Activated CD8-positive, alpha-beta T cell treated with anti-CD3 and anti-CD28 coated beads for 36 hours (primary cell): ENCODE measurements at regions of chr4 and their contacts with region 1.

Region 1: GRCh38 chr4:103008875-103009729 is 10.4 kb downstream of the SLC9B1 start:
- DNase-seq: no peak
- ATAC-seq: peak; percentile 93
- H3K4me3 Mint-ChIP-seq: no peak overlapping the region
- H3K27ac Mint-ChIP-seq: no peak overlapping the region
- H3K4me1 Mint-ChIP-seq: no peaks in the 10 kb centered on the region
- H3K27me3 Mint-ChIP-seq: no peaks in the 10 kb centered on the region
- CTCF ChIP-seq: peak; percentile 83

Region 2: DNA sequence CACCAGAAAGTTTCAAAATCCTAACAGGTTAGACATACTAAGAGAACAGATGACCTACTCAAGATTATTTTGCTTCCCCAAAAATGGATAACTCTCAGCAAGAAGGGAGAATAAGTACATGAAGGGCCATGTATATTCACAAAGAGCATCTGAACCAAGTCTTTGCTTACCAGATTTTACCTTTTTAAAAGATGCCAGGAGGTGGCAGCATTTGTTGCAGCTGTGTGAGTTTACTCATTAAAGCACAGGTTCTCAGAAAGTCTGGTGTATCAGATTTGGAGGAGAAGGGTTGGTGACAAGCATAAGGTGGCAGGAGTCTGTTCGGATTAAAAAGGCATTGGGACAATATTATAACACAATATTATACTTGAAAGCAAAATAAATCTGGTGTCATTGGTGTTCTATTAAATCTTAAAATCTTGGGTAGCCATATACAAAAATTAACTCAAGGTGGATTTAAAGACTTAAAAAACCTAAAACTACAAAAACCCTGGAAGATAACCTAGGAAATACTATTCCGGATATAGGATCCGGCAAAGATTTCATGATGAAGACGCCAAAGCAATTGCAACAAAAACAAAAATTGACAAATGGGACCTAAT is 559.2 kb before region 1 on chr4:
- CTCF ChIA-PET with region 1: interaction called, 5 read pairs
- POLR2A ChIA-PET with region 1: no interaction called
- intact Hi-C with region 1: loop called (anchors 5 kb)
- DNase-seq: peak; percentile 73
- ATAC-seq: peak; percentile 77
- H3K4me3 Mint-ChIP-seq: no peak overlapping the region
- H3K27ac Mint-ChIP-seq: no peak overlapping the region
- H3K4me1 Mint-ChIP-seq: peaks cover 48% of the 10 kb centered on the region
- H3K27me3 Mint-ChIP-seq: no peaks in the 10 kb centered on the region
- CTCF ChIP-seq: peak; percentile 88

Region 3: DNA sequence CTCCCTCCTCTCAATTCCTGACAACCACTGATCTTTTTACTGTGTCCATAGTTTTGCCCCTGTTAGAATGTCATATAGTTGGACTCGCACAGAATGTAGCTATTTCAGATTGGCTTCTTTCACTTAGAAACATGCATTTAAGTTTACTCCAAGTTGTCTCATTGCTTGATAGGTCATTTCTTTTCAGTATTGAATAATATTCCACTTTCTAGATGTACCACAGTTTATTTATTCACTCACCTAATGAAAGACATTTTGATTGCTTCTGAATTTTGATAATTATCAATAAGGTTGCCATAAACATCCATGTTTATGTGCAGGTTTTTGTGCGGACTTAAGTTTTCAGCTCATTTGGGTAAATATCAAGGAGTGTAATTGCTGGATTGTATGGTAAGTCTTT is 28.1 kb before region 1 on chr4:
- CTCF ChIA-PET with region 1: no interaction called
- POLR2A ChIA-PET with region 1: no interaction called
- intact Hi-C with region 1: no loop called
- DNase-seq: no peak
- ATAC-seq: no peak
- H3K4me3 Mint-ChIP-seq: no peak overlapping the region
- H3K27ac Mint-ChIP-seq: no peak overlapping the region
- H3K4me1 Mint-ChIP-seq: no peaks in the 10 kb centered on the region
- H3K27me3 Mint-ChIP-seq: no peaks in the 10 kb centered on the region
- CTCF ChIP-seq: no peak

Region 4: GRCh38 chr4:103050736-103051436 is 41.8 kb after region 1 on chr4:
- CTCF ChIA-PET with region 1: no interaction called
- POLR2A ChIA-PET with region 1: no interaction called
- intact Hi-C with region 1: no loop called
- DNase-seq: no peak
- ATAC-seq: no peak
- H3K4me3 Mint-ChIP-seq: no peak overlapping the region
- H3K27ac Mint-ChIP-seq: peak overlapping the region; percentile 62
- H3K4me1 Mint-ChIP-seq: peaks cover 13% of the 10 kb centered on the region
- H3K27me3 Mint-ChIP-seq: no peaks in the 10 kb centered on the region
- CTCF ChIP-seq: no peak

Region 5: DNA sequence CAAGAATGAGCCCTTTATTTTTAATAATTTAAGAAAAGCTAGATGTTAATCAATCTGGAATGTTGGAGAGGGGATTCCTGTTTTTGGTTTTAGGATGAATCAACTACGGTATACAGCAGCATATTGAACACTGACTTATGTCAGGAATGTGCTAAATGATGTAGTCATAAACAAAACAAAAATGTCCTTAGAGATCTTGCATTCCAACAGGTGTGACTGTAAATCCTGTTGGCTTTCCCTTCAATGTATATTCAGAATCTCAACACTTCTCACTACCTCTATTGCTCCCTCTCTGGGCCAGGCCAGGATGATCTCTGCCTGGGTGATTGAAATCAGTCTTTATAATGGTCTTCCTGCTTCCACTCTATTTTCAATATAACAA is 128.3 kb after region 1 on chr4:
- CTCF ChIA-PET with region 1: no interaction called
- POLR2A ChIA-PET with region 1: no interaction called
- intact Hi-C with region 1: no loop called
- DNase-seq: no peak
- ATAC-seq: no peak
- H3K4me3 Mint-ChIP-seq: no peak overlapping the region
- H3K27ac Mint-ChIP-seq: no peak overlapping the region
- H3K4me1 Mint-ChIP-seq: peaks cover 7% of the 10 kb centered on the region
- H3K27me3 Mint-ChIP-seq: no peaks in the 10 kb centered on the region
- CTCF ChIP-seq: no peak